HCT116 (cell line): ENCODE measurements at regions of chr3 and their contacts with region 1.

Region 1: DNA sequence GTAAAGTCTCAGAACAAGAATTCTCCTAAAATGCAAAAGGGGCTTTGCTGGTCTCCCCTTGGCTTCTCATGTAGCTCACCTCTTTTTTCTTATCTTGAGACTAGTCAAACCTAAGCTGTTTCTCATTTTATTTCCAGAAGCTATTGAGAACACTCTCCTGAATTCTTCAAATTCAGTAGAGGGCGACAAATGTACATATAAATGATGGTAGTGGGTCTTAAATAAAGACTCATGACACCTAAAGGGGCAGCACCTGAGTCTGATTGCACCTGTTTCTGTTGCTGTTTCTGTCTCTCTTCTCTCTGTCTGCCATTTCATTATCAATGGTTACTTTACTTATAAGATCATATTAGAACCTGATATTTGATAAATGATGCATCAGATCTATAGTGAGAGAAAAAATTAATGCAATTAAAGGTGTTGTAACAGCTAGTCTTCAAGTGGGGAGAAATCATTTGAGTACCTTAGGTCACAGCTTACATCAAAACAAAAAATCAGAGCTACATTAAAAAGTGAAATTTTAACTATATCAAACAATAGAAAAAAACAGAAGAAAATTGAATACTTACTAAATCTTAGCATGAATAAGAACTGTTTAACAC is 7.0 kb downstream of the ADIPOQ start:
- DNase-seq: peak; percentile 35
- ATAC-seq: peak; percentile 90
- H3K4me3 ChIP-seq: no peak overlapping the region
- H3K27ac ChIP-seq: no peak overlapping the region
- H3K4me1 ChIP-seq: no peaks in the 10 kb centered on the region
- H3K27me3 ChIP-seq: peaks cover 25% of the 10 kb centered on the region
- CTCF ChIP-seq: peak; percentile 29 to 91 (median 59); a peak in 5 of 6 replicates
- POLR2A ChIP-seq: no peak
- RAD21 ChIP-seq: peak; percentile 92

Region 2: DNA sequence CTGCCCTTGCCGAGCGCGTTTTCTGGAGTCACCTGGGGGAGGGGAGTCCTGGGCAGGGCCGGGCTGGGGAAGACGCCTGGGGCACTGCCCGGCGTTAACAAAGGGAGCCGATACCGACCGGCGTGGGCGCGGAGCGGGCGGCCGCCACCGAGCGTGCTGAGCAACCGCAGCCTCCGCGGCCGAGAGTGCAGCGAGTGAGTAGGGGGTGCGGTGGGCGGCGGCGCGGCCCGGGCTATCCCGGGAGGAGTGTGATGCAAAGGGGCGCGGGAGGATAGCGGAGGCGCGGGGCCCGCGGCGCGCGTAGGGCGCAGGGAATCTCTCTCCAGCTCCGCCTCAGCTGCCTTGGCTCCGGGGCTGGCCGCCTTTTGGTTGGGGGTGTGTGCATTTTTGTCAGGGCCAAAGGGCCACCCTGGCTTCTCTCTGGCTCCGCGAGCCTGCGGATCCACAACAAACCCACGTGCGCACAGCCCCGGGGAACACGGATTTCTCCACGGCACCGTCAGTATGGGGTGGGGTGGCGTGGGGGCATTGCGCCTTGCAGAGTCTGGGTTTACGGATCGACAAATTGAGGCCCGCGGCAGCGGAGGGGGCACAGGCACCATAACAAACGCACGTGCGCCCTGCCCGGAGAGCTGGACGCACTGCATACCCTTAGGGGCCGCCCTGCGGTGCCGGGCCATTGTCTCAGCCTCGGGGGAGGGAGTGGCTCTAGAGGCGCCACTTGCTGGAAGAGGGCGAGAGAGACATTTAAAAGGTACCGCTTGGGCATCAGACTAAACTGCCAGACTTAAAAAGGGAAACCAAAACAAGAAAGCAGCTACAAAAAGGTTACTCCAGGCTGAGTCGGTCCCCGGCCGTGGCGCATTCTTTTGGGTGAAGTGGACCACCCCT is 81.4 kb after region 1 on chr3:
- CTCF ChIA-PET with region 1: interaction called, 6 read pairs
- POLR2A ChIA-PET with region 1: no interaction called
- RAD21 ChIA-PET with region 1: no interaction called
- intact Hi-C with region 1: loop called (anchors 5 kb)
- DNase-seq: peak; percentile 42
- ATAC-seq: peak; percentile 82
- H3K4me3 ChIP-seq: peak overlapping the region; percentile 77 to 94
- H3K27ac ChIP-seq: peak overlapping the region; percentile 61
- H3K4me1 ChIP-seq: peaks cover 16 to 18% of the 10 kb centered on the region in 2 experiments
- H3K27me3 ChIP-seq: no peaks in the 10 kb centered on the region
- CTCF ChIP-seq: peak; percentile 14 to 21 (median 15); a peak in 2 of 6 replicates
- POLR2A ChIP-seq: peak; percentile 33
- RAD21 ChIP-seq: 0 out of 2 replicates have a peak, but pooled peaks have one; percentile 14

Region 3: GRCh38 chr3:187112934-187113793 is 263.7 kb after region 1 on chr3:
- CTCF ChIA-PET with region 1: interaction called, 13 read pairs
- POLR2A ChIA-PET with region 1: no interaction called
- RAD21 ChIA-PET with region 1: no interaction called
- intact Hi-C with region 1: no loop called
- DNase-seq: peak; percentile 18
- ATAC-seq: peak; percentile 87
- H3K4me3 ChIP-seq: no peak overlapping the region
- H3K27ac ChIP-seq: no peak overlapping the region
- H3K4me1 ChIP-seq: no peaks in the 10 kb centered on the region
- H3K27me3 ChIP-seq: 0 out of 2 replicates have a peak, but pooled peaks cover 6% of the 10 kb centered on the region
- CTCF ChIP-seq: peak; percentile 36 to 76 (median 64)
- POLR2A ChIP-seq: no peak
- RAD21 ChIP-seq: peak; percentile 75

Region 4: DNA sequence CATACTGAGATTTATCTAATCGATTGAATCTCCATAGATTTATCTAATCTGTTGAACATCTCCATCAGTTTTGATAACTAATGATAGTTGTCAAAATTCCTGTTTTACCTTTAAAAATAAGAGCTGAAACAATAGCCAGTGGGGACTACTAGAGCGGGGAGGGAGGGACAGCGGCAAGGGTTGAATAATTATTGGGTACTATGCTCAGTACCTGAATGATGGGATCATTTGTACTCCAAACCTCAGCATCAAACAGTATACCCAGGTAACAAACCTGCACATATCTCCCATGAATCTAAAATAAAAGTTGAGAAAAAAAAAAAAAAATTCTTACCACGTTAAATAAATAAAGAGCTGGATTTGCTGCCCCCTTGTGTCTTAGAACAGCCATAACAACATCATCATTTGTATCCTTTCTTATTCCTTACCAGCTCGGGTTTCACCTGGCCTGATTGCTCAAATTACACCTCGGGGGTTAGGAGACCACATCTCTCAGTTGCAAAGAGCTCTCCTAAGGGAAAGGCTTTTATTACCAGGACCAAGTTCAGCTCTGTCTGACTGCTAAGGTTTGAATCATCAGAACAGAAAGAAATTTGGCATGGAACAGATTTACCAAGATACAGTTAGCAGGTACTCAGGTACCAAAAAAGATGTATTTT is 315.5 kb after region 1 on chr3:
- CTCF ChIA-PET with region 1: interaction called, 96 read pairs
- POLR2A ChIA-PET with region 1: interaction called, 4 read pairs
- RAD21 ChIA-PET with region 1: interaction called, 8 to 17 read pairs
- intact Hi-C with region 1: loop called (anchors 1 kb)
- DNase-seq: peak; percentile 45
- ATAC-seq: peak; percentile 90
- H3K4me3 ChIP-seq: no peak overlapping the region
- H3K27ac ChIP-seq: no peak overlapping the region
- H3K4me1 ChIP-seq: peaks cover 0 to 2% of the 10 kb centered on the region in 2 experiments; a peak in 1 of 4 replicates
- H3K27me3 ChIP-seq: no peaks in the 10 kb centered on the region
- CTCF ChIP-seq: peak; percentile 49 to 86 (median 67)
- POLR2A ChIP-seq: no peak
- RAD21 ChIP-seq: peak; percentile 78

Region 5: GRCh38 chr3:187291001-187291511 is 441.6 kb after region 1 on chr3:
- CTCF ChIA-PET with region 1: interaction called, 9 read pairs
- POLR2A ChIA-PET with region 1: no interaction called
- RAD21 ChIA-PET with region 1: no interaction called
- intact Hi-C with region 1: loop called (anchors 10 kb)
- DNase-seq: no peak
- ATAC-seq: no peak
- H3K4me3 ChIP-seq: no peak overlapping the region
- H3K27ac ChIP-seq: no peak overlapping the region
- H3K4me1 ChIP-seq: no peaks in the 10 kb centered on the region
- H3K27me3 ChIP-seq: peaks cover 14% of the 10 kb centered on the region; the same call in 1 of the 2 replicates
- CTCF ChIP-seq: no peak
- POLR2A ChIP-seq: no peak
- RAD21 ChIP-seq: no peak

Region 6: DNA sequence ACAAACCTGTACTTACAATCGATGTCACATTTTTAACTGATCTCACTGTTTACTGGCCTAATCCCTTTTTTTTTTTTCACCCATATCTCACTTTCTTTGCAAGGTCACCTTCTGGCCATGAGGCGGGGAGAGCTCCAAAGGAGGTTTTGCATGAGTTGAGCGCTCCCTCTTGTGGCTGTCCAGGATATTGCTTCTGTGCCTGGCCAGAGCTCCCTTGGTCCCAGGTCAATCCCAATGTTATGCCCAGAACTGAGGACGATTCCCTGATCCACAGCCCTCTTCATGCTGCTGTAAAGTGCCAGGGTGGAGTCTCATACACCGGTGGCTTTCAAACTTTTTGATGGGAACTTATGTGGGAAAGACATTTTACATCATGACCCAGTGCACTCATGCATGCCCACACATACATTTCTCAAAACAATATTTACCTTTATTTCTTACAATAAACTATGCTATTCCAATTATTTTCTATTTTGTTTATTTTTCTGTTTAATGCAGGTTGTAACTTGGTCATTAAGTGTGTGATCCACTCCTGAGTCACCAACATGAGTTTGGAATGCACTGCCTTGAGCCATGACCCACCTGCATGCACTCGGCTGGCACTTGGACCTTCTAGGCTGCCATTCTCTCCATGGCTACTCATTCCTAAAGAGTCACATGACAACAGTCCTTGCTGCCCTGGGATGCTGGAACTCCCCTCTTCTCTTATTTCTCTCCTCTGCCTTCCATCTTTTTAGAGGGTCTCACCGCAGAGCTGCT is 830.3 kb after region 1 on chr3:
- CTCF ChIA-PET with region 1: interaction called, 12 read pairs
- POLR2A ChIA-PET with region 1: no interaction called
- RAD21 ChIA-PET with region 1: no interaction called
- intact Hi-C with region 1: loop called (anchors 1 kb)
- DNase-seq: peak; percentile 64
- ATAC-seq: peak; percentile 94
- H3K4me3 ChIP-seq: no peak overlapping the region
- H3K27ac ChIP-seq: no peak overlapping the region
- H3K4me1 ChIP-seq: no peaks in the 10 kb centered on the region
- H3K27me3 ChIP-seq: peaks cover 11% of the 10 kb centered on the region
- CTCF ChIP-seq: peak; percentile 85 to 92 (median 90)
- POLR2A ChIP-seq: no peak
- RAD21 ChIP-seq: peak; percentile 92